ENCODE measurements at regions of chr2 and their contacts with region 1.

Region 1: GRCh38 chr2:181104512-181105115 is 124.2 kb downstream of the UBE2E3 start:
- DNase-seq: no peak
- ATAC-seq: no peak; the same call in 2 of the 3 replicates
- H3K4me3 ChIP-seq: no peak overlapping the region
- H3K27ac ChIP-seq: peak overlapping the region; percentile 4; the same call in 1 of the 2 replicates
- H3K4me1 ChIP-seq: peaks cover 25% of the 10 kb centered on the region
- H3K27me3 ChIP-seq: no peaks in the 10 kb centered on the region
- CTCF ChIP-seq: peak; percentile 63 to 67 (median 65)
- EP300 ChIP-seq: no peak
- POLR2A ChIP-seq: no peak
- RAD21 ChIP-seq: peak; percentile 100

Region 2: GRCh38 chr2:181152226-181152625 is 47.6 kb after region 1 on chr2:
- CTCF ChIA-PET with region 1: interaction called, 11 read pairs
- POLR2A ChIA-PET with region 1: no interaction called
- RAD21 ChIA-PET with region 1: interaction called, 5 read pairs
- SMC1A ChIA-PET with region 1: interaction called, 4 read pairs
- in situ Hi-C with region 1: no loop called
- intact Hi-C with region 1: no loop called
- DNase-seq: no peak
- ATAC-seq: no peak
- H3K4me3 ChIP-seq: no peak overlapping the region
- H3K27ac ChIP-seq: no peak overlapping the region
- H3K4me1 ChIP-seq: no peaks in the 10 kb centered on the region
- H3K27me3 ChIP-seq: no peaks in the 10 kb centered on the region
- CTCF ChIP-seq: no peak
- EP300 ChIP-seq: no peak
- POLR2A ChIP-seq: no peak
- RAD21 ChIP-seq: no peak

Region 3: DNA sequence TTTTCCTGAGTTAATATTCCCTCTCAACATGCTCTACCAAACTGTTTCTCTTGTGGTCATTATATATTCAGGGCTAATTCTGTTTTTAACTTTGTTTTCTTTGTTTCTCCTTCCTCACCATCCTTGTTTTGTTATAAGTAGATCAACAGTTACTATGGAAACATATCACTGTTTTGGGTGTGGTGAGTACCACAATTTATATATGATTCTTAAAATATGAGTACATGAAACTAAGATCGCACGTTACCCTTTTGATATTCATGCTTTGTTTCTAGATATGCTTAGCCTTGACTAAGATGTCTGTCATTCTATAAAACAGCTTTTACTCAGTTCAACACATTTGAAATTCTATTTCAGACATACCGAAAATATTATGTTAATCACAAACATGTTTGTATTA is 120.3 kb after region 1 on chr2:
- CTCF ChIA-PET with region 1: no interaction called
- POLR2A ChIA-PET with region 1: no interaction called
- RAD21 ChIA-PET with region 1: no interaction called
- SMC1A ChIA-PET with region 1: no interaction called
- in situ Hi-C with region 1: no loop called
- intact Hi-C with region 1: no loop called
- DNase-seq: no peak
- ATAC-seq: no peak
- H3K4me3 ChIP-seq: no peak overlapping the region
- H3K27ac ChIP-seq: no peak overlapping the region
- H3K4me1 ChIP-seq: no peaks in the 10 kb centered on the region
- H3K27me3 ChIP-seq: no peaks in the 10 kb centered on the region
- CTCF ChIP-seq: no peak
- EP300 ChIP-seq: no peak
- POLR2A ChIP-seq: no peak
- RAD21 ChIP-seq: no peak

Region 4: DNA sequence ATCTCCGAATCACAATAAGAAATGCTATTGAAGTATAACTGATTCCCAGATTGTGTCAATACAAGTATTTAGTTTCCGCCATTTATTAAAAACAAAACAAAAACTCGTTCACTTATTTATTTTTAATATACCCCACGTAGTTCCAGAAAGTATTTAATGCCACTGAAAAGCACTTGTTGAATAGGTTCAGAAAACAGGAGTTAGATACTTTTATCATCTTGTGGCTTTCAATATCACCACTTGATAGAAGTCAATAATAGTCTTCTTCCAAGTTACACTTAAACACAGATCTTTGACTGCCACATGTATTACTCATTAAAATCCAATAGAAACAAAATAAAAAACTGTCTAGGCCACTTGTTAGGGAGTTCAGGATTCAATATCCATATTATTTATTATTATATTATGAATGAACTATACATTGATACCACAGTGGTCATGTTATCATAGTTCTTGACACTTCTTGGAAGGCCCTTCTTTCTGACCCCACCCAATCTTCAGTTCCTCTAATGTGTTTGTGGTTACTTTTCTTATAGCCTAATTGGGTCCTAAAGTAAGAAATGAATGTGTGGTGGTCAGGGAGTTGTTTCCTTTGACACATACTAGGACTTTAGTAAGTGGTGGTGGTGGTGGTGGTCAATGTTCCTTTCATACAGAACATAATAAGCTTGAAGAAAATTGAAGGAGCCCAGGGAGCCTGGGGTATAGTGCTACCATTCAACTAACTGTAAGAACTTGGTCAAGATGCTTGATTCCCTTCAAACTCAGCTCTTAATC is 131.3 kb after region 1 on chr2:
- CTCF ChIA-PET with region 1: interaction called, 14 read pairs
- POLR2A ChIA-PET with region 1: interaction called, 3 read pairs
- RAD21 ChIA-PET with region 1: interaction called, 7 read pairs
- SMC1A ChIA-PET with region 1: interaction called, 6 read pairs
- in situ Hi-C with region 1: no loop called
- intact Hi-C with region 1: loop called (anchors 2 kb)
- DNase-seq: peak; percentile 82
- ATAC-seq: peak; percentile 92
- H3K4me3 ChIP-seq: no peak overlapping the region
- H3K27ac ChIP-seq: no peak overlapping the region
- H3K4me1 ChIP-seq: peaks cover 18% of the 10 kb centered on the region
- H3K27me3 ChIP-seq: no peaks in the 10 kb centered on the region; a peak in 1 of 4 replicates
- CTCF ChIP-seq: no peak
- EP300 ChIP-seq: peak; percentile 84 to 91; a peak in 3 of 4 replicates
- POLR2A ChIP-seq: no peak
- RAD21 ChIP-seq: peak; percentile 32; the same call in 1 of the 2 replicates

Region 5: GRCh38 chr2:181457121-181457740 is 352.6 kb after region 1 on chr2 and contains the start of gene ITGA4:
- CTCF ChIA-PET with region 1: interaction called, 73 read pairs
- POLR2A ChIA-PET with region 1: interaction called, 3 read pairs
- RAD21 ChIA-PET with region 1: interaction called, 86 read pairs
- SMC1A ChIA-PET with region 1: interaction called, 52 read pairs
- in situ Hi-C with region 1: loop called (anchors 5 kb)
- intact Hi-C with region 1: loop called (anchors 1 kb)
- DNase-seq: peak; percentile 56
- ATAC-seq: peak; percentile 90
- H3K4me3 ChIP-seq: peak within 1 kb of the TSS; percentile 88
- H3K27ac ChIP-seq: peak within 1 kb of the TSS; percentile 97
- H3K4me1 ChIP-seq: peaks cover 13% of the 10 kb centered on the region
- H3K27me3 ChIP-seq: no peaks in the 10 kb centered on the region
- CTCF ChIP-seq: peak; percentile 81 to 92 (median 81)
- EP300 ChIP-seq: no peak
- POLR2A ChIP-seq: peak; percentile 84
- RAD21 ChIP-seq: peak; percentile 93
- polyA plus RNA-seq, gene ITGA4: 12.4 to 16.2 TPM

Region 6: GRCh38 chr2:181573140-181573736 is 468.6 kb after region 1 on chr2:
- CTCF ChIA-PET with region 1: interaction called, 39 read pairs
- POLR2A ChIA-PET with region 1: no interaction called
- RAD21 ChIA-PET with region 1: interaction called, 31 read pairs
- SMC1A ChIA-PET with region 1: interaction called, 32 read pairs
- in situ Hi-C with region 1: no loop called
- intact Hi-C with region 1: loop called (anchors 10 kb)
- DNase-seq: no peak
- ATAC-seq: no peak
- H3K4me3 ChIP-seq: no peak overlapping the region
- H3K27ac ChIP-seq: no peak overlapping the region
- H3K4me1 ChIP-seq: no peaks in the 10 kb centered on the region
- H3K27me3 ChIP-seq: peaks cover 2 to 3% of the 10 kb centered on the region in 2 experiments; a peak in 2 of 4 replicates
- CTCF ChIP-seq: peak; percentile 20 to 48 (median 37); a peak in 5 of 6 replicates
- EP300 ChIP-seq: no peak
- POLR2A ChIP-seq: no peak
- RAD21 ChIP-seq: peak; percentile 47

Region 7: GRCh38 chr2:181991171-181991885 is 886.7 kb after region 1 on chr2:
- CTCF ChIA-PET with region 1: no interaction called
- POLR2A ChIA-PET with region 1: no interaction called
- RAD21 ChIA-PET with region 1: no interaction called
- SMC1A ChIA-PET with region 1: no interaction called
- in situ Hi-C with region 1: no loop called
- intact Hi-C with region 1: loop called (anchors 10 kb)
- DNase-seq: peak; percentile 57
- ATAC-seq: peak; percentile 98
- H3K4me3 ChIP-seq: peak overlapping the region; percentile 18; the same call in 1 of the 2 replicates
- H3K27ac ChIP-seq: peak overlapping the region; percentile 44
- H3K4me1 ChIP-seq: peaks cover 17% of the 10 kb centered on the region
- H3K27me3 ChIP-seq: peaks cover 0 to 4% of the 10 kb centered on the region in 2 experiments; a peak in 1 of 4 replicates
- CTCF ChIP-seq: no peak
- EP300 ChIP-seq: peak; percentile 63 to 91; a peak in 3 of 4 replicates
- POLR2A ChIP-seq: no peak
- RAD21 ChIP-seq: no peak